Gastrocnemius medialis (tissue), 4 donors: ENCODE measurements at regions of chr1 and their contacts with region 1.

Region 1: GRCh38 chr1:153946622-153947241 is at the start of gene DENND4B:
- DNase-seq: peak; percentile 71 to 86
- ATAC-seq: peak; percentile 74 to 75
- H3K4me3 ChIP-seq: peak within 1 kb of the TSS; percentile 70 to 90 (median 78)
- H3K27ac ChIP-seq: peak within 1 kb of the TSS; percentile 98 to 99 (median 98)
- H3K4me1 ChIP-seq: peaks cover 15 to 31% of the 10 kb centered on the region in 2 donors
- H3K27me3 ChIP-seq: no peaks in the 10 kb centered on the region
- CTCF ChIP-seq: peak; percentile 91 to 99 (median 97)
- POLR2A ChIP-seq: no peak
- total RNA-seq, gene DENND4B: 38.0 to 45.8 (median 40.1) TPM

Region 2: GRCh38 chr1:153796791-153797659 is 149.7 kb before region 1 on chr1:
- in situ Hi-C with region 1: loop called in 1 of 4 experiments (anchors 10 kb)
- intact Hi-C with region 1: loop called (anchors 1 kb)
- DNase-seq: peak; percentile 62 to 81
- ATAC-seq: peak; percentile 89 to 91
- H3K4me3 ChIP-seq: no peak overlapping the region
- H3K27ac ChIP-seq: no peak overlapping the region
- H3K4me1 ChIP-seq: no peaks in the 10 kb centered on the region
- H3K27me3 ChIP-seq: no peaks in the 10 kb centered on the region
- CTCF ChIP-seq: peak; percentile 86 to 98 (median 94)
- POLR2A ChIP-seq: no peak

Region 3: DNA sequence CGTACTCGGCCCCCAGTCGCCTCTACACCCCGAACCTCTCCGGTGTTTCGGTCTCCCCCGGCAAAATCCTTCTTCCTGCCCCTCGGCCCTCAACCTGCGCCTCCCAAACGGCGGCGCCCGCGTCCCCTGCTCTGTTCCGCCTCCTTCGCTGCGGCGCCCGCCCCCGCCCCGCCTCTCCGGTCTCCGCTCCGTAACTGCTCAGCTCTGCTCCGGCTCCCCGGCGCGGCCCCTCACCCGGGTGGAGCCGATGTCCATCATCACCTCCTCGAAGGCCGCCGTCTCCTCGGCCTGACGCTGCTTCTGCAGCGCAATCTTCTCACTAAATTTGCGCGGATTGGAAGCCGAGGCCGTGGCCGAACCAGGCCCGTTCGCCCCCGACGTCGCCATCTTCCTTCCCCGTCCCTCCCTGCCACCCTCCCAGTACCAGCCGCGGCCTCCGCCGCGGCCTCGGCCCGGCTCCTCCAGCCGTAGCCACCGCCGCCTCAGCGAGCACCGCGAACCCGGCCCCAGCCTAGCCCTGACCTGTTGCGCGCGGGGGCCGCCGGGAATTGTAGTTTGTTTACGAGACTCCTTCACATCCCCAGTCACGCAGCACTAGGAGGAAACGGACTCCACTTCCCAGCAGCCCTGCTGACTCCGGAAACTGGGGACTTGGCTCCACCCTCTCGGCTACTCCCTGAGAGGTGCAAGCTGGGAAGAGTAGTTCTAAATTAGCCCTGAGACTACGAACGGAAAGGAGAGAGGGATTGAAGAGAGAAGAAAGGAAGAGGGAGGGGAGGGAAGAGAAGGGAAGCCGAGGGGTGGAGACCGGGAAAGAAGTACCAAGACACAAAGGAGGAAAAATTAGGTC is 11.6 kb after region 1 on chr1 and contains the start of gene CRTC2:
- in situ Hi-C with region 1: no loop called
- intact Hi-C with region 1: loop called (anchors 1 kb)
- DNase-seq: peak; percentile 99
- ATAC-seq: peak; percentile 81 to 88
- H3K4me3 ChIP-seq: peak within 1 kb of the TSS; percentile 88 to 100 (median 98)
- H3K27ac ChIP-seq: peak within 1 kb of the TSS; percentile 91 to 98 (median 94)
- H3K4me1 ChIP-seq: peaks cover 69 to 72% of the 10 kb centered on the region in 2 donors
- H3K27me3 ChIP-seq: no peaks in the 10 kb centered on the region
- CTCF ChIP-seq: no peak
- POLR2A ChIP-seq: peak; percentile 82 to 83
- total RNA-seq, gene CRTC2: 17.4 to 27.1 (median 23.3) TPM